H1 (cell line): ENCODE measurements at regions of chr6 and their contacts with region 1.

Region 1: DNA sequence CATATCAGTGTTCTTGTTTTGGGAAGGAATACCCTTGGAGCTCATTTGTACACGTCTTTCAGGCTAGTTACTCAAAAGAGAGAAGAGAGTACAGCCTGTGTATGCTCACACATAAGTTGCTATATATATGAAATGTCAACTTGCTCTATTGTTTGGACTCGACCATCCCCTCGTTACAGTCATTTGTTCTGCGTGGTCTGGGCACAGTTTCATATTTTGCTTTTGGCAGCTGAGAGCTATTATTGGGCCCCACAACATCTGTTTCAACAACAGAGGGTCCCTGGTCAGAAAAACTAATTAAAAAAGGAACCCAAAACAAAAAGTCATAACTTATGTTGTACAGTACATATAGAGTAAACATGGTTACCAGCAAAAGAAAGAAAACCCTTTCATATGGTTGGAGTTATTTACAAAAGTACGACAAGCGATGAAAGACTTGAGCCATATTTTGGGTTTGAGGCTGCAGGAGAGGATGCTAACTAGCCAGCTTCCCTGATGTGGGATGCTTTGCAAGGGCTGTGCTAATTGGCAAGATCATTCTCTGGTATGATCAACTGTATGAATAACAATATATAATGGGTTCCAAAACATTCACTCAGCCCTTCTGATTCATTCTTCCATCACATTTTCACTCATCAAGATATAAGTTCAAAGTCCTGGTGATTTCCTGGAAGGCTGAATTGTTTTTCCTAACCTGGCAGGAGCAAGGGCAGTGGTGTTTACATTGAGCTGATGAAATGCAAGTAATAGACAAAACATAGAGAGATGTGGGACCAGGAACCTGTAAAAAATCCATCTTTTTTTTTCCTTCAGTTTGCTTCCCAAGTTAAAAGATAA is 137.9 kb downstream of the RPS12 start:
- DNase-seq: no peak
- H3K4me3 ChIP-seq: no peak overlapping the region
- H3K27ac ChIP-seq: no peak overlapping the region
- H3K4me1 ChIP-seq: no peaks in the 10 kb centered on the region
- H3K27me3 ChIP-seq: no peaks in the 10 kb centered on the region
- CTCF ChIP-seq: no peak
- EP300 ChIP-seq: no peak
- POLR2A ChIP-seq: no peak
- RAD21 ChIP-seq: no peak

Region 2: DNA sequence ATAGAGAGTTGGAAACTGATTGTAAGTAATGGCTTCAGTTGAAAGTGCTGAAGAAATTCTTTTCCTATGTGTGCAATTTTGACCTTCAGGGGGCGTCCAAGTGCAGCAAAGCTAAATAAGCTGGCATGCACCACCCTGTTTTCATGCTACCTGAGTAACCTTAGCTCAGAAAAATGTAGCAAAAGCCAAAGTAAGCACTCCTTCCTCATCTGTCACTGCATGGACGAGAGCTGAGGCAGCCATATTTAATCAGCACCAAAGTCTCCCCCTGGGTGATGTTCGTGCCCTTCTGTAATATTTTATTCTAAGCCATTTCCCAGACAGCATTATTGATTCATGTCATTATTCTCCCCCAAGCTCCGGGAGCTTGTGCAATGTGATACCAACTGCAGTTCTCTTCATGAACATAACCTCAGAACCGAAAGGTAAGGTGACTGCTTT is 14.8 kb before region 1 on chr6:
- CTCF ChIA-PET with region 1: interaction called, 11 read pairs
- POLR2A ChIA-PET with region 1: no interaction called
- DNase-seq: peak in 1 of 2 experiments; percentile 72
- H3K4me3 ChIP-seq: no peak overlapping the region
- H3K27ac ChIP-seq: no peak overlapping the region
- H3K4me1 ChIP-seq: peaks cover 0 to 4% (median 0%) of the 10 kb centered on the region in 4 experiments; a peak in 1 of 7 replicates
- H3K27me3 ChIP-seq: no peaks in the 10 kb centered on the region
- CTCF ChIP-seq: peak in 2 of 3 experiments; percentile 66 to 79; a peak in 3 of 4 replicates
- EP300 ChIP-seq: no peak
- POLR2A ChIP-seq: no peak
- RAD21 ChIP-seq: peak; percentile 74 to 75